PC-3 (cell line): ENCODE measurements at regions of chr4 and their contacts with region 1.

Region 1: DNA sequence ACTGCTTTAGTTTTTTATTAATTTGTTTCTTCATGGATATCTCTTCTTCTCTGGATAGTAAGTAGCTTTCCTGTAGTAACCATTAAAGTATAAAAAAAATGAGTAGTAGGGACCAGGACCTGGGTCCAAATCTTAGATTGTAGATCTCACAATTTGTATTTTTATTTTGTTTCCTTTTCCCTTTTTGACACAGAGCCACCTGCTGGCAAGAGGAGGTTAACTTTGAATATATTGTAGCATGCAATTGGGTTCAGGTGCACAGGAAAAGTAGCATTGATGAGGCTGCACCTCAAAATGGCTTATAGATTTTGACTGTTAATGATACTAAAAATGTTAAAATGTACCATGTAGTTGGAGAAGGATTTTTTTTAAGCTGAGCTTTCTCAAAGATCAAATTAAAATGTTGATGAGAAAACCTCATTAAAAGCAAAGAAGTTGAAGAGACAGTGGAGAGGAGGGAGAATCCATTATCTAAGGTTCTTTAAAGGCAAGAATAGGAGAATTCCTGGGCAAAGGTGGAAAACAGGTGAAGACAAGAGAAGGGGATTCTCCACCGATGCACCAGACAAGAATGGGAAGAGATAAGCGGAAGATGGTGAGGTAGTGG is 48.3 kb upstream of the HPGDS start:
- DNase-seq: peak; percentile 44
- ATAC-seq: 0 out of 2 replicates have a peak, but pooled peaks have one; percentile 29
- H3K4me3 ChIP-seq: no peak overlapping the region
- H3K27ac ChIP-seq: no peak overlapping the region
- H3K4me1 ChIP-seq: no peaks in the 10 kb centered on the region
- H3K27me3 ChIP-seq: no peaks in the 10 kb centered on the region
- CTCF ChIP-seq: peak; percentile 75

Region 2: GRCh38 chr4:94221916-94222315 is 169.0 kb before region 1 on chr4:
- CTCF ChIA-PET with region 1: no interaction called
- POLR2A ChIA-PET with region 1: no interaction called
- intact Hi-C with region 1: no loop called
- DNase-seq: no peak
- ATAC-seq: no peak
- H3K4me3 ChIP-seq: no peak overlapping the region
- H3K27ac ChIP-seq: no peak overlapping the region
- H3K4me1 ChIP-seq: peaks cover 3% of the 10 kb centered on the region; the same call in 1 of the 2 replicates
- H3K27me3 ChIP-seq: no peaks in the 10 kb centered on the region
- CTCF ChIP-seq: no peak

Region 3: GRCh38 chr4:94304365-94304971 is 86.4 kb before region 1 on chr4:
- CTCF ChIA-PET with region 1: no interaction called
- POLR2A ChIA-PET with region 1: no interaction called
- intact Hi-C with region 1: loop called (anchors 1 kb)
- DNase-seq: peak; percentile 60
- ATAC-seq: peak; percentile 61
- H3K4me3 ChIP-seq: no peak overlapping the region
- H3K27ac ChIP-seq: no peak overlapping the region
- H3K4me1 ChIP-seq: no peaks in the 10 kb centered on the region
- H3K27me3 ChIP-seq: no peaks in the 10 kb centered on the region
- CTCF ChIP-seq: peak; percentile 83

Region 4: DNA sequence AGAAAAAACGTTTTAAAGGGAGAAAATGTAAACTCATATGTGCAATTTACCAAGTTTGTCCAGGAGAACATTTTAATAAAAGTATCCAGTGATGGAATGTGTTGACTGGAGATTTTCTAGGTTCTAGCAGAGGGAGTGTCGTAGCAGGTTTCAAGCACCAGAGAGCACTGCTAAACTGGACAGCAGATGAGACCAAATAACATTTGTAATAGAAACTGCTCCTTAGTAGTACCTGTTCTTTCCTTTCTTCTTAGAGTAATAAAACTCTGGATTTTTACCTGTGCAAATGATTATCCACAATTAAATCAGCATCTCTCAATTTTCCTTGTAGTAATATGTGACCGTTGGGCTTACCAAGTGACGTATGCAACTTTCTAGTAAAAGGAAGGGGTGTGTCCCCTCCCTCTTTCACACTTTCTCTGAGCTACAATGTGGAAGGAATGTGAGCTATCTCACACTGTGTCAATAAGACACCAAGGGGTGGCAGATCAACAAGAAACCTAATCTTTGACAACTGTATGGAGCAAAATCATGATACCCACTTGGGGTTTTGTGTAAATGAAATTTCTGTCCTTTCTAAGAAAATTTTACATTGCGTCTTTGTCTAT is 57.8 kb before region 1 on chr4:
- CTCF ChIA-PET with region 1: no interaction called
- POLR2A ChIA-PET with region 1: no interaction called
- intact Hi-C with region 1: loop called (anchors 1 kb)
- DNase-seq: peak; percentile 9
- ATAC-seq: no peak
- H3K4me3 ChIP-seq: no peak overlapping the region
- H3K27ac ChIP-seq: no peak overlapping the region
- H3K4me1 ChIP-seq: peaks cover 17% of the 10 kb centered on the region
- H3K27me3 ChIP-seq: no peaks in the 10 kb centered on the region
- CTCF ChIP-seq: peak; percentile 49

Region 5: DNA sequence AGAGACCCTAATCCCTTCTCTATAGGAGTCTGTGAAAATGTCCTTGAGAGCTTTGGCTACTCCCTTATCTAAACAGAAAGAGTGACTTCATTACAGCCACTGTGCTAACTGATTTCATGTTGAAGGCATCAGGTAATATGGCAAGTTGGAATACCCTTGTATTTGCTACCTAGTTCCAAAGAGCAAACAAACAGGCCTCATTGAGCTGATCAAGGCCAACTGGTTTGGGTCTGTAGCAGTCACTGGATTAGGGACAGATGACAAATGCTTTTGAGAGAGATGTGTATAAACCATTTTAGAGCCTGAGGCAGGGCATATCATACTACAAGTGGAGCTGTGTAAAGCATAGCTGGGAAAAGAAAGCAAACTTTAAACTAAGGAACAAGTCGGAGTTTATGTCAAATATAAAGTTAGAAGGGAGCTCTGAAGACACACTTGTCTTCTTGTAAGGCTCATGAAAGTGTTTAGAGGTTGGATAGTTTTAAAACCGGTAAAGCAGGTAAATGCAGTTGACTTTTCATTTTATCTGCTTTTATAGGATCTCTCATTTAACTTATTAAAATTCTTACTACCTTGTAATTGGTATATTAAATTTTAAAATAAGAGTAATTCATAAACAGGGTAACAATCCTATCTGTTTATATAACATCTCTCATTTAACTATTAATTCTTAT is 38.1 kb after region 1 on chr4:
- CTCF ChIA-PET with region 1: no interaction called
- POLR2A ChIA-PET with region 1: no interaction called
- intact Hi-C with region 1: no loop called
- DNase-seq: peak; percentile 32
- ATAC-seq: peak; percentile 29; the same call in 1 of the 2 replicates
- H3K4me3 ChIP-seq: no peak overlapping the region
- H3K27ac ChIP-seq: 0 out of 2 replicates have a peak overlapping the region, but pooled peaks have one; percentile 2
- H3K4me1 ChIP-seq: peaks cover 3% of the 10 kb centered on the region; the same call in 1 of the 2 replicates
- H3K27me3 ChIP-seq: no peaks in the 10 kb centered on the region
- CTCF ChIP-seq: no peak

Region 6: GRCh38 chr4:94621491-94622080 is 230.7 kb after region 1 on chr4:
- CTCF ChIA-PET with region 1: no interaction called
- POLR2A ChIA-PET with region 1: no interaction called
- intact Hi-C with region 1: no loop called
- DNase-seq: peak; percentile 67
- ATAC-seq: peak; percentile 24; the same call in 1 of the 2 replicates
- H3K4me3 ChIP-seq: no peak overlapping the region
- H3K27ac ChIP-seq: no peak overlapping the region
- H3K4me1 ChIP-seq: peaks cover 4% of the 10 kb centered on the region; the same call in 1 of the 2 replicates
- H3K27me3 ChIP-seq: no peaks in the 10 kb centered on the region
- CTCF ChIP-seq: peak; percentile 74

Region 7: DNA sequence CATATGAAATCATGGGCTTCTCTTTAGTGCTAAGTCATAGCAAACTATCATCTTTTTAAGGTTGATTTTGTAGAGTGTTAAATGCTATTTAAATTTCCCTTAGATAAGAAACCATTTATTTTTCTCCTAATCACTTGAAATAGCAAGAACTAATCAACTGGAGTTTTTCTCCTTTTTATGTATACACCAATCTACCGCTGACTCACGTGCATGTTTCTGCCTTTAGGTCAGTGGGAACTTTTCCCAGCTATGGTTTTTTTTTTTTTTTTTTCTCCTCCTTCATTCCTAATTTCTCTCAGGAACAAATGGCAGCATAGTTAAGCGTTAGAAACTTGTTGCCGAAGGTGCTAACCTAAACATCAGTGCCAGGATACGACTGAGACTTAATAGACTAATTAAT is 543.3 kb after region 1 on chr4:
- CTCF ChIA-PET with region 1: no interaction called
- POLR2A ChIA-PET with region 1: no interaction called
- intact Hi-C with region 1: no loop called
- DNase-seq: peak; percentile 47
- ATAC-seq: peak; percentile 29
- H3K4me3 ChIP-seq: peak overlapping the region; percentile 43; the same call in 1 of the 2 replicates
- H3K27ac ChIP-seq: peak overlapping the region; percentile 51
- H3K4me1 ChIP-seq: peaks cover 43% of the 10 kb centered on the region
- H3K27me3 ChIP-seq: no peaks in the 10 kb centered on the region
- CTCF ChIP-seq: no peak